ENCODE measurements at regions of chr2 and their contacts with region 1.

Region 1: DNA sequence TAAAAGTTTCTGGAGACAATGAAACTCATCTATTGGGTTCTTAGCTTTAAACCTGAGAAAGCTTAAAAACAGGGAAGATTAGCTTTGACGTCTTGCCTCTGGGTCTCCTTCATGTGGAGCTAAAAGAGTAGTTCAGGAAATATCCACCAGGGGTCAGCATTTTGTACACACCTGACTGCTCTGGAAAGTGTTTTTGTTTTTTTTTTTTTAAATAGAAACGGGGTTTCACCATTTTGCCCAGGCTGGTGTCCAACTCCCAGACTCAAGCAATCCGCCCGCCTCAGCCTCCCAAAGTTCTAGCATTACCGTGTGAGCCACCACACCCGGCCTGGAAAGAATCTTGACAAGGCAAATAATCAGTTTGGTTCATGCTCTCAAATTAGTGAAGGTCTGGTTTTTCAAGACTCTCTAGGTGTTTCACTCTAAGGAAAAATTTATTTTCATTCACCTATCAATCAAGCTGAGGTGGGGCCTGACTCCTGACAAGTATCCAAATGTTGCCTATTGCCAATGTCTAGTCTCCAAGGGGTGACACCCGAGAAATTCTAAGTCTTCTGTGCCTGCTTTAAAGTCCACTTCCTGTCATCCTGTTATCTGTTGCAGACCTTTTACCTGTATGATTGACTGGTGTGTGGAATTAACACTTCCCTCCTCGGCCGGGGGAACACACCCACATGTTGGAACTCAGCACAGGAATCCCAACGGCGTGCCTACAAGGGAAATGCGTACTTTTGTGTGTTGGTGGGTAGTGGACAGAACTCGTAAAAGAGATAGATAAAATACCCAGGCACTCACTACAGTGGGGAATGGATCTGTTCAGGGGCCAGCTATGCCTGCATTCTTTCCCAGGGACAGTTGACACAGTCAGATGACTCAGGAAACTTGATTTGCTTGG is 11.3 kb downstream of the IL1RN start:
- DNase-seq: peak; percentile 62
- H3K4me3 ChIP-seq: no peak overlapping the region
- H3K27ac ChIP-seq: no peak overlapping the region
- H3K4me1 ChIP-seq: no peaks in the 10 kb centered on the region
- H3K27me3 ChIP-seq: peaks cover 0 to 6% of the 10 kb centered on the region in 2 experiments
- CTCF ChIP-seq: peak; percentile 47 to 69
- POLR2A ChIP-seq: no peak

Region 2: DNA sequence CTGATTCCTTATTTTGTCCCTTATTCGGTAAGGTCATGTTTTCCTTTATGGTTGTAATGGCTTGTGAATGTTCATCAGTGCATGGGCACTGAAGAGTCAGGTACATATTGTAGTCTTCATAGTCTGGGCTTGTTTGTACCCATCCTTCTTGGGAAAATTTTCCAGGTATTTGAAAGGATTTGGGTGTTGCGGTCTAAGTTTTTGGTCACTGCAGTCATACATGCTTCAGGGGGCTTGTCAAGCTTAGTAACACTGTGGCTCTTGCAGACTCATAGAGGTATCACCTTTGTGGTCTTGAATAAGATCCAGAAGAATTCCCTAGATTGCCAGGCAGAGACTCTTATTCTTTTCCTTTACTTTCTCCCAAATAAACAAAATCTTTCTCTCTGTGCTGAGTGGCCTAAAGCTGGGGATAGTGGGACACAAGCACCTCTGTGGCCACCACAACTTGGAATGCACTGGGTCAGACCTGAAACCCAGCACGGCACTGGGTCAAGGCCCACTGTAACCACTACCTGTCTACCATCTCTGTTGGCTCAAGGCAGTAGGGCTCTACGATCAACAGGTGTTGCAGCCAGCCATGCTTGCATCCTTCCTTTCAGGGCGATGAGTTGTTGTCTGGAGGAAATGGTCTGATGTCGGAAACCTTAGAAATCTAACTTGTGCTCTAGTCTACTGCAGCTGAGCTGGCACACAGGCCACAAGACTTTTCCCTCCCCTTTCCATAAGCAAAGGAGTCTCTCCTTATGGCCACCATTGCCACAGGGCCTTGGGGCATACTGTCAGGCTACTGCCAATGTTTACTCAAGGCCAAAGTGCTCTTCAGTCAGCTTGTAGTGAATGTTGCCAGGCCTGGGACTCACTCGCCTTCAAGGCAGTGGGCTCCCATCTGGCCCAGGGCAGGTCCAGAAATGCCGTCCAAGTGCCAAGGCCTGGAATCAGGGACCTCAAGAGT is 10.2 kb after region 1 on chr2:
- CTCF ChIA-PET with region 1: interaction called, 21 read pairs
- POLR2A ChIA-PET with region 1: no interaction called
- dilution Hi-C with region 1: no loop called
- intact Hi-C with region 1: no loop called
- DNase-seq: no peak
- H3K4me3 ChIP-seq: no peak overlapping the region
- H3K27ac ChIP-seq: no peak overlapping the region
- H3K4me1 ChIP-seq: no peaks in the 10 kb centered on the region
- H3K27me3 ChIP-seq: peaks cover 2 to 13% of the 10 kb centered on the region in 2 experiments
- CTCF ChIP-seq: no peak
- POLR2A ChIP-seq: no peak

Region 3: GRCh38 chr2:113173542-113174395 is 35.1 kb after region 1 on chr2 and contains the start of gene PSD4:
- CTCF ChIA-PET with region 1: interaction called, 13 read pairs
- POLR2A ChIA-PET with region 1: no interaction called
- dilution Hi-C with region 1: no loop called
- intact Hi-C with region 1: no loop called
- DNase-seq: no peak
- H3K4me3 ChIP-seq: no peak within 1 kb of the TSS
- H3K27ac ChIP-seq: no peak within 1 kb of the TSS
- H3K4me1 ChIP-seq: no peaks in the 10 kb centered on the region
- H3K27me3 ChIP-seq: peaks cover 0 to 7% of the 10 kb centered on the region in 2 experiments
- CTCF ChIP-seq: no peak
- POLR2A ChIP-seq: no peak
- total RNA-seq, gene PSD4: 0.09 and 0.24 TPM in 2 replicates

Region 4: DNA sequence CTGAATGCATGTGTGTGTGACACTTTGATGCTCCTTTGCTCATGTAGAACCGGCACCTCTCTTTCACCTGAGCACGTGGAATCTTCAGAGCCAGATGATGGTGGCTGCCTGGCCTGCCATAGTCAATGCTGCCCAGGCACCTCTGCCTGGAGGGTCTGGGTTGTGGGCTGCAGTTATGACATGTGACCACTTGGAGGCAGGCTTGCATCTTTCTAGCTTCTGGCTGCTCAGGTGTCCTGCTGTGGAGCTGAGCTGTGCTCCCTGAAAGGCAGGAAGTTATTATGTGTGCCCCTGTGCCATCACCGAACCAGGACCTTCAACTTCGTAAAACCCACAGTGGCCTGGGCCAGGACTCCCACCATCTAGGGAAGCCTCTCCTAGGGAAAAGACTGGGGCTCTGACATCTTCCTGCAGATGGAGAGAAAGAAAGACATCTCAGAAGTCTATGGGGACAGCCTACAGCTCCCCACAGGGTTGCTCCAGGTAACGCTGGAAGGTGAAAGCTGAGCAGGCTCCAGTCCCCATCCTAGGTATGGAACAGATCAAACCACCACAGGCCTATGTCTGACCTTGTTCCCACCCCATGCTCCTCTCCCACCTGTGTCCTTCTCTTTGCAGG is 65.3 kb after region 1 on chr2:
- CTCF ChIA-PET with region 1: interaction called, 310 read pairs
- POLR2A ChIA-PET with region 1: no interaction called
- dilution Hi-C with region 1: no loop called
- intact Hi-C with region 1: loop called (anchors 1 kb)
- DNase-seq: peak; percentile 64
- H3K4me3 ChIP-seq: no peak overlapping the region
- H3K27ac ChIP-seq: no peak overlapping the region
- H3K4me1 ChIP-seq: peaks cover 2% of the 10 kb centered on the region
- H3K27me3 ChIP-seq: no peaks in the 10 kb centered on the region
- CTCF ChIP-seq: peak; percentile 81 to 88
- POLR2A ChIP-seq: no peak

Region 5: GRCh38 chr2:113370478-113371091 is 231.9 kb after region 1 on chr2:
- CTCF ChIA-PET with region 1: interaction called, 43 read pairs
- POLR2A ChIA-PET with region 1: no interaction called
- dilution Hi-C with region 1: no loop called
- intact Hi-C with region 1: loop called (anchors 1 kb)
- DNase-seq: peak; percentile 61
- H3K4me3 ChIP-seq: no peak overlapping the region
- H3K27ac ChIP-seq: no peak overlapping the region
- H3K4me1 ChIP-seq: no peaks in the 10 kb centered on the region
- H3K27me3 ChIP-seq: no peaks in the 10 kb centered on the region
- CTCF ChIP-seq: peak; percentile 44 to 50
- POLR2A ChIP-seq: no peak